B cell (primary cell): ENCODE measurements at regions of chr5 and their contacts with region 1.

Region 1: DNA sequence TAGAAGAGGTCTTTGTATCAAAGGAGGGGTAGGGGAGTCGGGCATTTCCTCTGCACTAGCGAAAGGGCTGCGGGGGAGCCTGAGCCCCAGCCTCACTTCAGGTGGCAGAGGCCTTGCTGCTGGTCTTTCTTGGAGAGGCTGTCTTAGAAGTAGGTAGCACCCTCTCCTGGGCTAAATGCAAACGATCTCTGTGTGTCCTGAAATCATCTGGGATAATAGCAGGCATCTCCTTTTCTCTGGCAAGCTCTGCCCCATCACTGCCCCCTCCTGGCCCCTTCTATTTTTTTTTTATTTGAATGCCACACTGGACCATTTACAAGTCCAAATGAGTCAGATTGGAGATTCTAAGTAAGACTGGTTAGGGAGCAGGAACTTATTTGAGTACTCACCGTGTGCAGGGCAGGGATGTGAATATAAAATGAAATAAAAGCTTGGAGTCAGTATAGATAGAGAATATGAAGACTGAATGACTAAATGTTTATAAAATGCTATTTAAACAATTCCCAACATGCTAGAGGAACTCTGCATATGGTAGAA is 137.1 kb downstream of the FGF1 start:
- DNase-seq: peak; percentile 44
- ATAC-seq: no peak
- H3K4me3 ChIP-seq: no peak overlapping the region
- H3K4me3 Mint-ChIP-seq: no peak overlapping the region
- H3K27ac ChIP-seq: no peak overlapping the region
- H3K27ac Mint-ChIP-seq: no peak overlapping the region
- H3K4me1 ChIP-seq: peaks cover 5 to 9% of the 10 kb centered on the region in 2 donors
- H3K4me1 Mint-ChIP-seq: peaks cover 8% of the 10 kb centered on the region
- H3K27me3 ChIP-seq: peaks cover 0 to 24% (median 21%) of the 10 kb centered on the region in 4 experiments
- H3K27me3 Mint-ChIP-seq: peaks cover 39% of the 10 kb centered on the region
- CTCF ChIP-seq: peak; percentile 66

Region 2: DNA sequence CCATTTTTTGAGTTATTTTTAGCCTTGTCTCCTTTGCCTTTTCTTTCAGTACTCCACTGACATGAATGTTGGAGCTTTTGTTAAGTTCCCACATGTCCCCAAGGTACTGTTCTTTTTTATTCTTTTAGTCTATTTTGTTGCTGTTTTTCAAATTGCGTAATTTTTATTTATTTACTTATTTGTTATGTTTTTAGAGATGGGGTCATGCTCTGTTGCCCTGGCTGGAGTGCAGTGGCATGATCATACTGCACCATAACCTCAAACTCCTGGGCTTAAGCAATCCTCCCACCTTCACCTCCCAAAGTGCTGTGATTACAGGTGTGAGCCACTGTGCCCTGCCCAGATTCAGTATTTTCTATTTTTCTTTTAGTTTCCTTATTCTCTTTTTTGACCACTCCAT is 1768.3 kb before region 1 on chr5:
- CTCF ChIA-PET with region 1: no interaction called
- POLR2A ChIA-PET with region 1: no interaction called
- intact Hi-C with region 1: no loop called
- DNase-seq: no peak
- ATAC-seq: no peak
- H3K4me3 ChIP-seq: no peak overlapping the region
- H3K4me3 Mint-ChIP-seq: no peak overlapping the region
- H3K27ac ChIP-seq: no peak overlapping the region
- H3K27ac Mint-ChIP-seq: no peak overlapping the region
- H3K4me1 ChIP-seq: no peaks in the 10 kb centered on the region
- H3K4me1 Mint-ChIP-seq: no peaks in the 10 kb centered on the region
- H3K27me3 ChIP-seq: peaks cover 0 to 8% (median 0%) of the 10 kb centered on the region in 4 experiments
- H3K27me3 Mint-ChIP-seq: peaks cover 9% of the 10 kb centered on the region
- CTCF ChIP-seq: no peak

Region 3: GRCh38 chr5:141992349-141992963 is 556.4 kb before region 1 on chr5:
- CTCF ChIA-PET with region 1: no interaction called
- POLR2A ChIA-PET with region 1: no interaction called
- intact Hi-C with region 1: loop called (anchors 5 kb)
- DNase-seq: peak; percentile 77
- ATAC-seq: peak; percentile 72
- H3K4me3 ChIP-seq: no peak overlapping the region
- H3K4me3 Mint-ChIP-seq: no peak overlapping the region
- H3K27ac ChIP-seq: no peak overlapping the region
- H3K27ac Mint-ChIP-seq: no peak overlapping the region
- H3K4me1 ChIP-seq: no peaks in the 10 kb centered on the region
- H3K4me1 Mint-ChIP-seq: no peaks in the 10 kb centered on the region
- H3K27me3 ChIP-seq: no peaks in the 10 kb centered on the region
- H3K27me3 Mint-ChIP-seq: no peaks in the 10 kb centered on the region
- CTCF ChIP-seq: peak; percentile 90

Region 4: DNA sequence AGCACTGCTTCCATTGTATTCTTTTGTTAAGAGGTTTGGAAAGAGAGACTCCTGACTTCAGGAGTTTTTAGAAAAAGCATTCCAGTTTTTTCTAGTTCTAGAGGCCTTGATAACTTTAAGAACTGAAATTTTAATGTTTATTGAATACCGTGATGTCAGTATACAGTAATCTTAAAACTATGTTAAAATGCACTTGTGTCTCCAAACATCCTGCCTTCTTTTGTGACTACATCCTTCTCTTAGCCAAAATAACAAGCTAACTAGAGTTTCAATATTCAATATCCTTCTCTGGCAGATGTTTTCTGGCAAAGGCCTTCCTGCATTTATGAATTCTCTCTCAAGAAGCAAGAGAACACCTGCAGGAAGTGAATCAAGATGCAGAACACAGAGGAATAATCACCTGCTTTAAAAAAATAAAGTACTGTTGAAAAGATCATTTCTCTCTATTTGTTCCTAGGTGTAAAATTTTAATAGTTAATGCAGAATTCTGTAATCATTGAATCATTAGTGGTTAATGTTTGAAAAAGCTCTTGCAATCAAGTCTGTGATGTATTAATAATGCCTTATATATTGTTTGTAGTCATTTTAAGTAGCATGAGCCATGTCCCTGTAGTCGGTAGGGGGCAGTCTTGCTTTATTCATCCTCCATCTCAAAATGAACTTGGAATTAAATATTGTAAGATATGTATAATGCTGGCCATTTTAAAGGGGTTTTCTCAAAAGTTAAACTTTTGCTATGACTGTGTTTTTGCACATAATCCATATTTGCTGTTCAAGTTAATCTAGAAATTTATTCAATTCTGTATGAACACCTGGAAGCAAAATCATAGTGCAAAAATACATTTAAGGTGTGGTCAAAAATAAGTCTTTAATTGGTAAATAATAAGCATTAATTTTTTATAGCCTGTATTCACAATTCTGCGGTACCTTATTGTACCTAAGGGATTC is 397.1 kb before region 1 on chr5:
- CTCF ChIA-PET with region 1: interaction called, 26 read pairs
- POLR2A ChIA-PET with region 1: no interaction called
- intact Hi-C with region 1: no loop called
- DNase-seq: peak; percentile 67
- ATAC-seq: no peak
- H3K4me3 ChIP-seq: no peak overlapping the region
- H3K4me3 Mint-ChIP-seq: no peak overlapping the region
- H3K27ac ChIP-seq: no peak overlapping the region
- H3K27ac Mint-ChIP-seq: no peak overlapping the region
- H3K4me1 ChIP-seq: no peaks in the 10 kb centered on the region
- H3K4me1 Mint-ChIP-seq: no peaks in the 10 kb centered on the region
- H3K27me3 ChIP-seq: no peaks in the 10 kb centered on the region
- H3K27me3 Mint-ChIP-seq: no peaks in the 10 kb centered on the region
- CTCF ChIP-seq: peak; percentile 90

Region 5: GRCh38 chr5:142499591-142500226 is 49.1 kb before region 1 on chr5:
- CTCF ChIA-PET with region 1: no interaction called
- POLR2A ChIA-PET with region 1: no interaction called
- intact Hi-C with region 1: no loop called
- DNase-seq: no peak
- ATAC-seq: no peak
- H3K4me3 ChIP-seq: no peak overlapping the region
- H3K4me3 Mint-ChIP-seq: no peak overlapping the region
- H3K27ac ChIP-seq: no peak overlapping the region
- H3K27ac Mint-ChIP-seq: no peak overlapping the region
- H3K4me1 ChIP-seq: no peaks in the 10 kb centered on the region
- H3K4me1 Mint-ChIP-seq: no peaks in the 10 kb centered on the region
- H3K27me3 ChIP-seq: no peaks in the 10 kb centered on the region
- H3K27me3 Mint-ChIP-seq: peaks cover 30% of the 10 kb centered on the region
- CTCF ChIP-seq: no peak

Region 6: DNA sequence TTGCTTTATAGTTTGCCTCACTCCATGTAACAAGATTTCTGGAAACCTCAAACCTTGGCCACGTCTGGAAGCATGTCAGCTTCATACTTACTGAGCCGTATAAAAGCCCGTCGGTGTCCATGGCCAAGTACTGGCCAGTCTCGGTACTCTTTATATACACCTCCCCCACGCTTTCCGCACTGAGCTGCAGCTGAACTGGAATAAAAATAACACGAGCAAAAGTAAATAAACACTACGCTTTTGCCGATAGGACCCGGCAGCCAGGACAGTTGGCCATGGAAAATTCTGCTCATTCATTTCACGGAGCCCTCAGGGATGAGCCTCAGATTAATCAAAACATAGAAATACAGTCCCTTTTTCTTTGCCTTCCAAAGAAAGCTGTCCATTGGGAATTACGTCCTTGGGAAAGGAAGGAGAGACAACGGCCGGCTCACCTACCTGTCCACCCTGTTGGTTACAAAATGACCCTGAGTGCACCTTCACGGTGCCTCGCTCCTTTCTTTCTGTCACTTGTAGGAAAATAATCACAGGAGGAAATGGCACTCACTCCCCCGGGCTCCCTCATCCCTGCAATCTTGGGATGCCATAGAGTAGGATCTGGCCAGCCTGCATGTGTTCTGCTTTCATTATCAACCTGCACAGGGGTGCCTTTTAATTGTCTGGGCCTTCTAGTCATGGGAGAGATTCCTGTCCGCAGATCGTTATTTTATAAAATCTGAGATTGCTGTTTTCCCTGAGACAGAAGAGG is 52.0 kb after region 1 on chr5:
- CTCF ChIA-PET with region 1: no interaction called
- POLR2A ChIA-PET with region 1: no interaction called
- intact Hi-C with region 1: no loop called
- DNase-seq: no peak
- ATAC-seq: no peak
- H3K4me3 ChIP-seq: no peak overlapping the region
- H3K4me3 Mint-ChIP-seq: no peak overlapping the region
- H3K27ac ChIP-seq: no peak overlapping the region
- H3K27ac Mint-ChIP-seq: no peak overlapping the region
- H3K4me1 ChIP-seq: no peaks in the 10 kb centered on the region
- H3K4me1 Mint-ChIP-seq: no peaks in the 10 kb centered on the region
- H3K27me3 ChIP-seq: peaks cover 0 to 17% (median 1%) of the 10 kb centered on the region in 4 experiments
- H3K27me3 Mint-ChIP-seq: peaks cover 44% of the 10 kb centered on the region
- CTCF ChIP-seq: no peak

Region 7: GRCh38 chr5:142611154-142611553 is 62.3 kb after region 1 on chr5:
- CTCF ChIA-PET with region 1: no interaction called
- POLR2A ChIA-PET with region 1: no interaction called
- intact Hi-C with region 1: loop called (anchors 2 kb)
- DNase-seq: peak; percentile 59
- ATAC-seq: peak; percentile 53
- H3K4me3 ChIP-seq: no peak overlapping the region
- H3K4me3 Mint-ChIP-seq: no peak overlapping the region
- H3K27ac ChIP-seq: no peak overlapping the region
- H3K27ac Mint-ChIP-seq: no peak overlapping the region
- H3K4me1 ChIP-seq: no peaks in the 10 kb centered on the region
- H3K4me1 Mint-ChIP-seq: no peaks in the 10 kb centered on the region
- H3K27me3 ChIP-seq: peaks cover 0 to 10% (median under 1%) of the 10 kb centered on the region in 4 experiments
- H3K27me3 Mint-ChIP-seq: peaks cover 28% of the 10 kb centered on the region
- CTCF ChIP-seq: peak; percentile 88